Heart left ventricle (tissue), 16 donors: ENCODE measurements at regions of chr22 and their contacts with region 1.

Region 1: GRCh38 chr22:43993027-43993760 is 30.9 kb upstream of the PARVB start:
- DNase-seq: peak; percentile 38 to 73 (median 56)
- ATAC-seq: peak in 3 of 4 donors; percentile 62 to 77 (median 70)
- H3K4me3 ChIP-seq: no peak overlapping the region
- H3K27ac ChIP-seq: peak overlapping the region in 1 of 12 donors; percentile 61
- H3K4me1 ChIP-seq: peaks cover 0 to 31% (median 9%) of the 10 kb centered on the region in 12 donors
- H3K27me3 ChIP-seq: no peaks in the 10 kb centered on the region
- CTCF ChIP-seq: peak; percentile 90 to 98 (median 96)
- POLR2A ChIP-seq: no peak

Region 2: DNA sequence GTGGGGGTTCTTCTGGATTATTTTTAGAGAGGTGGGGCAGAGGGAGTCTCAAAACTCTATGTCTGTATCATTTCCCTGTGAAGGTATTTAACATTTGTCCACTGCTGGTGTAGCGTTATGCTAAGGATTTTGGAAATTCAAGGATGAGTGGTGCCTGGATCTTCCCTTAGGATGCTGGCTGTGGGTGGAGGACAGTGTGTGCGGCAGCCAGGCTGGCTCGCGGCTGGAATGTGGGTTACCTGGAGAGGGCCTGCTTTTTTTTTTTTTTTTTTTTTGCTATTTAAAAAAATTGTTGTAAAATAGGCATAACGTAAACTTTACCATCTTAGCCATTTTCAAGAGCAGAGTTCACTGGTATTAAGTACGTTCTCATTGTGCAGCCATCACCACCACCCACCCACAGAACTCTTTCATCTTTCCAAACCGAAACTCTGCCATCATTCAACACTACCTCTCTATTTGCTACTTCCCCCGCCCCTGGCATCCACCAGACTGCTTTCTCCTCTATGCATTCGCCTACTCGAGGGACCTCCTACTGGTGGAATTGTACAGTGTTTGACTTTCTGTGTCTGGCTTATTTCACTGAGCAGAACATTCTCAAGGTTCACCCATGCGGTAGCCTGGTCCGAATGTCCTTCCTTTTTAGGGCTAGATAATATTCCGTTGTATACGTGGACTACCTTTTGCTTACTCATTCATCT is 98.0 kb after region 1 on chr22:
- intact Hi-C with region 1: loop called in 4 of 10 experiments (anchors 2 to 5 kb)
- DNase-seq: peak in 2 of 5 donors; percentile 4 to 11
- ATAC-seq: no peak
- H3K4me3 ChIP-seq: no peak overlapping the region
- H3K27ac ChIP-seq: no peak overlapping the region
- H3K4me1 ChIP-seq: peaks cover 0 to 34% (median 7%) of the 10 kb centered on the region in 12 donors
- H3K27me3 ChIP-seq: no peaks in the 10 kb centered on the region
- CTCF ChIP-seq: peak in 2 of 12 donors; percentile 7 to 10
- POLR2A ChIP-seq: no peak

Region 3: DNA sequence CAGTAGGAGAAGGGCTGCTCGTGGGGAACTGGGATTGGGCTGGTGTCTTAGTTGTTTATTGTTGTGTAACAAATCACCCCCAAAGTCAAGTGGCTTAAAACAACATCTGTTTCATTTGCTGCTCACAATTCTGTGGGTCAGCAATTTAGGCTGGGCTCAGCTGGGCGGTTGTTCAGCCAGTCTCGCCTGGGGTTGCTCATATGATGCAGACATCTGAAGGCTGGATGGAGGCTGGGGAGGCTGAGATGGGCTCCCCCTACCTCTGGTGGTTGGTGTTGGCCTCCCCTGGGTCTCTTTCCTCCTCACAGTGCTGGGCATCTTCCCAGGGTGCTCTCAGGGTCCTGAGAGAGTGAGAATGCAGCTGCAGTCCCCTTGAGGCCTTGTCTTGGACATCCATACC is 144.2 kb after region 1 on chr22:
- intact Hi-C with region 1: no loop called
- DNase-seq: peak in 1 of 5 donors; percentile 30
- ATAC-seq: no peak
- H3K4me3 ChIP-seq: no peak overlapping the region
- H3K27ac ChIP-seq: no peak overlapping the region
- H3K4me1 ChIP-seq: peaks cover 0 to 41% (median 3%) of the 10 kb centered on the region in 12 donors
- H3K27me3 ChIP-seq: no peaks in the 10 kb centered on the region
- CTCF ChIP-seq: no peak
- POLR2A ChIP-seq: no peak

Region 4: GRCh38 chr22:44147821-44148574 is 154.8 kb after region 1 on chr22:
- intact Hi-C with region 1: no loop called
- DNase-seq: no peak
- ATAC-seq: no peak
- H3K4me3 ChIP-seq: no peak overlapping the region
- H3K27ac ChIP-seq: peak overlapping the region in 1 of 12 donors; percentile 66
- H3K4me1 ChIP-seq: peaks cover 0 to 43% (median 6%) of the 10 kb centered on the region in 12 donors
- H3K27me3 ChIP-seq: no peaks in the 10 kb centered on the region
- CTCF ChIP-seq: no peak
- POLR2A ChIP-seq: no peak

Region 5: DNA sequence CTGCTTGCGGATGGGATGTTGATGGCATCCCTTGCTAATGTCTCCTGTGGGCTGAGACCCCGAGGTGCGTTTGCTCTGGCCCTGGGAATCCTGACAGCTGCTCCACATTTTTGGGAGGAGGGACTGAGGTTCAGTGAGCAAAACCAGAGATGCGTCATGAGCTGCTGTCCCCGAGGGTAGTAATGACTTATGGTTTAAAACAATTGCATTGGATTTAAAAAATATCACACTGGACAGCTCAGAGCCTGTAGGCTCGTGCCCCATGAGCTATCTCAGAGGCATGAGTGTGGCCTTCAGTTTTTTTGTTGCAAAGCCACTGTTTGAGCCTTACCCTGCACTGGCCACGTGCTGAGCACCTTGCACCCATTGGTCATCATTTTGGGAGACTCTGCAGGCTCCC is 166.6 kb after region 1 on chr22:
- intact Hi-C with region 1: loop called in 1 of 10 experiments (anchors 10 kb)
- DNase-seq: no peak
- ATAC-seq: no peak
- H3K4me3 ChIP-seq: no peak overlapping the region
- H3K27ac ChIP-seq: peak overlapping the region in 1 of 12 donors; percentile 78
- H3K4me1 ChIP-seq: peaks cover 0 to 6% (median 0%) of the 10 kb centered on the region in 12 donors
- H3K27me3 ChIP-seq: no peaks in the 10 kb centered on the region
- CTCF ChIP-seq: no peak
- POLR2A ChIP-seq: no peak

Region 6: DNA sequence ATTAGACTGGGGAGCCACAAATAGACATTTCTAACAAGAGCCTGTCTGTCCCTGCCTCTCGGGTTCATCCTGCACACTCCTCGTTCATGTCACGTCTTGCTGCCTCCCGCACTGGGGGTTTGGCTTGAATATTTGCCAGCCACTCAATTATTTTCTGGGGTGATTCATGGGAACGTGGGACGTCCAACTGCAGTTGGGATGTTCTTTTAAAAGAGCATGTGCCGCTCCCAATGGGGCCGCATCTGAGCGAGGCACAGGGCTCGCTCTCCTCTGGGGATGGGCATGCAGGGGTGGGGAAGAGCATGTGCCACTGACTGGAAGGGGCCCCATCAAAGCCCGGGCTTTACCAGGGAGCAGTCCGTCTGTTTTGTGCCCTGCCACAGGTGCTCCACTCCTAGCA is 231.0 kb after region 1 on chr22:
- intact Hi-C with region 1: no loop called
- DNase-seq: no peak
- ATAC-seq: no peak
- H3K4me3 ChIP-seq: no peak overlapping the region
- H3K27ac ChIP-seq: no peak overlapping the region
- H3K4me1 ChIP-seq: no peaks in the 10 kb centered on the region
- H3K27me3 ChIP-seq: peaks cover 0 to 9% (median 0%) of the 10 kb centered on the region in 9 donors
- CTCF ChIP-seq: no peak
- POLR2A ChIP-seq: no peak

Region 7: GRCh38 chr22:44329179-44329796 is 336.1 kb after region 1 on chr22:
- intact Hi-C with region 1: loop called in 2 of 10 experiments (anchors 5 to 10 kb)
- DNase-seq: no peak
- ATAC-seq: no peak
- H3K4me3 ChIP-seq: no peak overlapping the region
- H3K27ac ChIP-seq: no peak overlapping the region
- H3K4me1 ChIP-seq: peaks cover 0 to 25% (median 15%) of the 10 kb centered on the region in 12 donors
- H3K27me3 ChIP-seq: peaks cover 0 to 44% (median 15%) of the 10 kb centered on the region in 9 donors
- CTCF ChIP-seq: no peak
- POLR2A ChIP-seq: no peak